ENCODE measurements at regions of chr9 and their contacts with region 1.

Region 1: DNA sequence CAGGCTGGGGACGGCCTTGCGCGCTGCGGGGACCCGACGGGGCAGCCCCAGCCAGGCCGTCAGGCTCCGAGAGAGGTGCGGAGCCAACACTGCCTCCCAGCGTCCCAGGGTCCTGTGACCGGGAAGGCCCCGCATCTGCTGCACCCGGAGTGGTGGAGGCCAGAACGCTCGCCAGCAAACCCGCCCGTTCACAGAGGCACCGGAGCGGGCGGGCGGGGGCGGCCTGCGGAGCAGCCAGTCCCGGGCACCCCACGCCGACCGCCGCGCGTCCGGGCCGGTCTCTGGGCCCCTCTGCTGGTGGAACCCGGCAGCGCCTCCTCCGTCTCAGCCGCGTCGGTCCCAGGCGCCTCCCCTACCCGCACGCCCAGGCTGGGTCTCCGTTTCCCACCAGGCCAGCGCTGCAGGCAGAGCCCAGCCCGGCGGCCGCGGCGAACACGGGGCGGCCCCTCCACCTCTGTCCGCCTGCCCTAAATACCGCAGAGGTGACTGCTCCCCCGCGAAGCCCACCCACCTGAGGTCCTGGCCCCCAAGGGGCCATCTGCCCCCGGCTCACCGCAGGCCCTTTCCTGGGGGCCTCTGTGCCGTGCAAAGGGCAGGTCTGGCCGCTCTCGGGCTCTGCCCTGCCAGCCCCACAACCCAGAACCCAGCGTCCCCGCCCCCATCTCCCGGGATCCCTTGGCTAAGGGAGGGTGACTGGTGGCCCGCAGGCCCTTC is 15.9 kb downstream of the EXD3 start:
- DNase-seq: peak; percentile 60 to 64
- ATAC-seq: peak; percentile 77 to 90
- H3K4me3 ChIP-seq: peak overlapping the region; percentile 35
- H3K27ac ChIP-seq: peak overlapping the region; percentile 58 to 82; a peak in 5 of 6 replicates
- H3K4me1 ChIP-seq: peaks cover 31% of the 10 kb centered on the region
- CTCF ChIP-seq: peak; percentile 72
- EP300 ChIP-seq: no peak
- POLR2A ChIP-seq: no peak
- RAD21 ChIP-seq: peak; percentile 69 to 87; a peak in 4 of 5 replicates

Region 2: GRCh38 chr9:137138722-137139467 is 268.1 kb before region 1 on chr9 and contains the start of gene GRIN1:
- CTCF ChIA-PET with region 1: no interaction called
- POLR2A ChIA-PET with region 1: no interaction called
- DNase-seq: no peak
- ATAC-seq: peak in 1 of 2 experiments; percentile 15; a peak in 1 of 6 replicates
- H3K4me3 ChIP-seq: no peak within 1 kb of the TSS
- H3K27ac ChIP-seq: no peak within 1 kb of the TSS
- H3K4me1 ChIP-seq: peaks cover 10% of the 10 kb centered on the region; the same call in 1 of the 3 replicates
- CTCF ChIP-seq: no peak
- EP300 ChIP-seq: no peak
- POLR2A ChIP-seq: no peak
- RAD21 ChIP-seq: no peak
- polyA plus RNA-seq, gene GRIN1: 0.11 and 0.13 TPM in 2 replicates

Region 3: DNA sequence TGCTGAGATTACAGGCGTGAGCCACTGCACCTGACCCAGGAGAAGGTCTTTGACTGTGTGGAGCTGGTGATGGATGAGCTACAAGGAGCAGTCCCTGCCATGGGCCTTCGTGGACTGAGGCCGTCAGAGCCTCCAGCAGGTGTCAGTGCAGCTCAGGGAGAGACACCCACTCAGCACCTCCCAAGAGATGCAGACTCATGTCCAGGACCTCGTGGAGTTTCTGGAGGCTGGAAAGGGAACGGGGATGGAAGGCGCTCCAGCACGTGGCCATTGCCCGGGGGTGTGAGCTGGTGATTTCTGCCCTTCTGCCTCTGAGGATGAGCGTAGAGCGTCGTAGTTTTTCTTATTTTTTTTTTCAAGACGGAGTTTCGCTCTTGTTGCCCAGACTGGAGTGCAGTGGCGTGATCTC is 120.1 kb before region 1 on chr9:
- CTCF ChIA-PET with region 1: interaction called, 12 read pairs
- POLR2A ChIA-PET with region 1: no interaction called
- DNase-seq: peak; percentile 88 to 94
- ATAC-seq: peak; percentile 99 to 100
- H3K4me3 ChIP-seq: no peak overlapping the region
- H3K27ac ChIP-seq: no peak overlapping the region
- H3K4me1 ChIP-seq: peaks cover 7% of the 10 kb centered on the region; the same call in 1 of the 3 replicates
- CTCF ChIP-seq: peak; percentile 54
- EP300 ChIP-seq: no peak
- POLR2A ChIP-seq: no peak
- RAD21 ChIP-seq: peak; percentile 59 to 86

Region 4: DNA sequence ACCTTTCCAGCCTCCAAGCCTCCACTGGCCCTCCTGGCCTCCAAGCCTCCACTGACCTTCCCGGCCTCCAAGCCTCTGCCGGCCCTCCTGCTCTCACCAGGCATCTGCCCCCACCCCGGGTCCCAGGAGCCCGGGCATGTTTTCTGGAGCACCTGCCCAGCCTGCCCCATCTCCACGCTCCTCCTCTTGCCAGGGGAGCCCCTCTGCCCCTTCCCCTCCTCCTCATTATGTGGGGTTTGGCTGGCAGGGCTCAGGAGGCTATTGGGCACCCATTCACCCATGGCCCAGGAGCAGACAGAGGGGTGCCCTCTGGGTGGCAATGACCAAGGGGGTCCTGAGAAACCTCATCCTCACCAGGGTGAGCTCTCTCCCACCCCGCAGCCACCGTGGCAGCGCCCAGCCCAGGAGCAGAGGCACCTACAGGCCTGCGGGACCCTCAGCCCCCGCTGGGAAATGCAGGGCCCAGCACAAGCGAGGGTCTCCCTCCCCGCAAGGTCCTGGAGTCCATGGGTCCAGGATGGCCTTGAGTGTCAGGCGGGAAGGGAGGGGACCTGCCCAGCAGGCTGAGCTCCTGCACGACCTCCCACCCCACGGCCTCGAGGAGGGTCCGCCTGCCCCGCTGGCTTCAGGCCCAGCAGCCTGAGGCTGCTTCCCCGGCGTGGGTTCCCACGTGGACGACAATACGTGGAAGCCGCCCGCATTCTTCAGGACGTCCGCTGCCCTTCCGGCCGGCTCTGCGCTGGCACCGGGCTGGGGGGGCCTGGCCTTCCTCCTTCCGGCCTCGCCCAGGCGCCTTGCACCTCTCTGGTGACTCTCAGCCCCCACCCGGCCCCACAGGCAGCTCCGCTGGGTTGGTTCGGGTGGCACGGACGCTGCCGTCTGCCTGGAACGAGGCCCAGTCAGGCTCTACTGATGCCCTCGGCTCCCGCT is 53.5 kb before region 1 on chr9:
- CTCF ChIA-PET with region 1: no interaction called
- POLR2A ChIA-PET with region 1: no interaction called
- DNase-seq: no peak
- ATAC-seq: no peak
- H3K4me3 ChIP-seq: no peak overlapping the region
- H3K27ac ChIP-seq: no peak overlapping the region
- H3K4me1 ChIP-seq: no peaks in the 10 kb centered on the region
- CTCF ChIP-seq: no peak
- EP300 ChIP-seq: no peak
- POLR2A ChIP-seq: no peak
- RAD21 ChIP-seq: no peak

Region 5: GRCh38 chr9:137383081-137383889 is 23.7 kb before region 1 on chr9:
- CTCF ChIA-PET with region 1: no interaction called
- POLR2A ChIA-PET with region 1: no interaction called
- DNase-seq: no peak
- ATAC-seq: peak; percentile 11 to 16; a peak in 2 of 6 replicates
- H3K4me3 ChIP-seq: no peak overlapping the region
- H3K27ac ChIP-seq: no peak overlapping the region
- H3K4me1 ChIP-seq: no peaks in the 10 kb centered on the region
- CTCF ChIP-seq: no peak
- EP300 ChIP-seq: no peak
- POLR2A ChIP-seq: no peak
- RAD21 ChIP-seq: no peak

Region 6: GRCh38 chr9:137682431-137682991 is 275.5 kb after region 1 on chr9:
- CTCF ChIA-PET with region 1: no interaction called
- POLR2A ChIA-PET with region 1: no interaction called
- DNase-seq: no peak
- ATAC-seq: peak in 1 of 2 experiments; percentile 24; a peak in 1 of 6 replicates
- H3K4me3 ChIP-seq: no peak overlapping the region
- H3K27ac ChIP-seq: no peak overlapping the region
- H3K4me1 ChIP-seq: 0 out of 3 replicates have a peak, but pooled peaks cover 3% of the 10 kb centered on the region
- CTCF ChIP-seq: no peak
- EP300 ChIP-seq: no peak
- POLR2A ChIP-seq: no peak
- RAD21 ChIP-seq: no peak

Measured in A549 (cell line).